Activated CD4-positive, alpha-beta T cell treated with anti-CD3 and anti-CD28 coated beads for 36 hours (primary cell): ENCODE measurements at regions of chr3 and their contacts with region 1.

Region 1: GRCh38 chr3:185659942-185660921 is 74.1 kb downstream of the SENP2 start:
- DNase-seq: peak; percentile 85
- ATAC-seq: peak; percentile 95
- H3K4me3 Mint-ChIP-seq: no peak overlapping the region
- H3K27ac Mint-ChIP-seq: no peak overlapping the region
- H3K4me1 Mint-ChIP-seq: peaks cover 2% of the 10 kb centered on the region
- H3K27me3 Mint-ChIP-seq: peaks cover 17% of the 10 kb centered on the region

Region 2: DNA sequence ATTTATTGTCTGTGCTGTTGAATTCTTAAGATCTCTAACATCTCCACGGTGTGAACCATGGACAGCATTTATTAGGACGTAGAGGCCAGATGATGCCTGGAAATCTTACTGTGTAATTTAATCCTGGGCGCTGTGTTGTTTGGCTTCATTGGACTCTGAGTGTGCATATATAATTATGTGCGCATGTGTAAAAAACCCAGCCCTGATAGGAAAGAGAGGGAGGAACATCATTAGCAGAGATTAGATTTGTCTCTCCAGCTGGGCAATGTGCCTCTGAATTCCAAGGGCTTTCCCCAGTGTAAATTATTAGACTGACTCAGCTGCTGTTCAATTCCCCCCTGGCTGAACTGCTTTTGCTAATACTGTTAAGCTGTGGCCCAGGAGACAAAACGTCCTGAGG is 257.7 kb before region 1 on chr3:
- CTCF ChIA-PET with region 1: no interaction called
- POLR2A ChIA-PET with region 1: no interaction called
- intact Hi-C with region 1: no loop called
- DNase-seq: no peak
- ATAC-seq: no peak
- H3K4me3 Mint-ChIP-seq: no peak overlapping the region
- H3K27ac Mint-ChIP-seq: no peak overlapping the region
- H3K4me1 Mint-ChIP-seq: no peaks in the 10 kb centered on the region
- H3K27me3 Mint-ChIP-seq: peaks cover 2% of the 10 kb centered on the region

Region 3: GRCh38 chr3:185623939-185624665 is 36.1 kb before region 1 on chr3:
- CTCF ChIA-PET with region 1: no interaction called
- POLR2A ChIA-PET with region 1: no interaction called
- intact Hi-C with region 1: no loop called
- DNase-seq: no peak
- ATAC-seq: no peak
- H3K4me3 Mint-ChIP-seq: no peak overlapping the region
- H3K27ac Mint-ChIP-seq: no peak overlapping the region
- H3K4me1 Mint-ChIP-seq: no peaks in the 10 kb centered on the region
- H3K27me3 Mint-ChIP-seq: no peaks in the 10 kb centered on the region

Region 4: DNA sequence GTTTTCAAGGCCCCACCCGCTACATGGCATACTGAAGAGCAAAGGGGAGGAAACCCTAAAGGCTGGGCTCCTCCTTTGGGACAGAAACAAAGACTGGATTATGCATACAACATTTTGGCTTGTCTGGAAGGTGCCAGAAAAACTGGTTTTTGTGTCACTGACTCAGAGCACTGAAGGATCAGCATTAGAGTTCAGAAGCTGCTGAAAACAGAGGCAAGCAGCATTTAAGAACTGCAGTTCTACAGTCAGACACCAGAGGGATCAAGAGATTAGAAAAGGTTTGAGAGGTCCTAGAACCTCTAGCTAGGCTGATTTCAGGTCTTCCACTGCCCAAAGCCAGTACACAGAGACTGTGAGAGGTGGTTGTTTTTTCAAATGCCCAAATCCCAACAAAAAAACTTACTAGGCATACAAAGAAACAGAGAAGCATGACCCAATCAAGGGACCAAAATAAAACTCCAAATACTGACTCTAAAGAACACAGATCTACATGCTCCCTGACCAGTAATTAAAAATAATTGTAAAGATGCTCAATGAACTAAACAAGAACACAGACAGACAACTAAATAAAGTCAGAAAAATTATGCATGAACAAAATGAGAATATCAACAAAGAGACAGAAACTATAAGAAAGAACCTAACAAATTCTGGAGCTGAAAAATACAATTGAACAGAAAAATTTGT is 17.1 kb after region 1 on chr3:
- CTCF ChIA-PET with region 1: interaction called, 34 read pairs
- POLR2A ChIA-PET with region 1: no interaction called
- intact Hi-C with region 1: no loop called
- DNase-seq: no peak
- ATAC-seq: no peak
- H3K4me3 Mint-ChIP-seq: no peak overlapping the region
- H3K27ac Mint-ChIP-seq: no peak overlapping the region
- H3K4me1 Mint-ChIP-seq: no peaks in the 10 kb centered on the region
- H3K27me3 Mint-ChIP-seq: peaks cover 23% of the 10 kb centered on the region

Region 5: GRCh38 chr3:185733980-185734724 is 73.9 kb after region 1 on chr3:
- CTCF ChIA-PET with region 1: interaction called, 12 read pairs
- POLR2A ChIA-PET with region 1: no interaction called
- intact Hi-C with region 1: no loop called
- DNase-seq: peak; percentile 37
- ATAC-seq: no peak
- H3K4me3 Mint-ChIP-seq: no peak overlapping the region
- H3K27ac Mint-ChIP-seq: no peak overlapping the region
- H3K4me1 Mint-ChIP-seq: no peaks in the 10 kb centered on the region
- H3K27me3 Mint-ChIP-seq: peaks cover 10% of the 10 kb centered on the region

Region 6: DNA sequence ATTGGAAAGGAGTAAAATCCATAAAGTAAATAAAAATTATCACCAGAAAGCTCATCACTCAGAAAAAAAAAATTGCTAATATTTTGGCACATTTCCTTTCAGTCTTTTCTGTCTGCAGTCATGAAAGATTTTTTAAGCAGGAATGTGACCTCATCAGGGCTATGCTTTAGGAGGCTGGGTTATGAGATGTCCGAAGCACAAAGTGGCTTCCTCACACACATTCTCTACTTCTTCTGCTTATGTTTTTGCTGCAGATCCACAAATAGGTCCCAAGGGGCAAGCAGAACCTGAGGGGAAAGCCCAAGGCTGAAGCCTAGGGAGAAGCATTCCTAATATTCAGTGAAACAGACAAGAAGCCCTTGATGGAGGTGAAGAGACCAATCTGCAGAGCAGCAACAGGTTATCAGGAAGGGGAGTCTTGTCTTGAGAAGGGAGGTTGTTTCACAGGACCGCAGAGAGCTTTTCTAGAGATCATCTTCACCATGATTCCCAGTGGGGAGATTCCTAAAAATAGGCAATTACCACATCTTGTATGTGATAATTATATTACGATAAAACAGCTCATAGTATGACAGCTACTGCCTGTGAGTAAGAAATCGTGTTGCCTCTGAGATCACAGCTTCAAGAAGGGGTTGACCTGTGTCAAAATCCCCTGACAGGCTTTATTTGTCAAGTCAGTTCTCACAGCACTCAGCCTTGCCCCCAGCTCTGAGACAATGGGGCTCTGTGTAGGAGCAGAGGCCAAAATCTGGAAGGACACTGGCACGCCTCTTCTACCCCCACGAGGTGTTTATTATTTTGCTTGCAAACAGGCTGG is 104.1 kb after region 1 on chr3:
- CTCF ChIA-PET with region 1: interaction called, 98 read pairs
- POLR2A ChIA-PET with region 1: no interaction called
- intact Hi-C with region 1: loop called (anchors 1 kb)
- DNase-seq: no peak
- ATAC-seq: no peak
- H3K4me3 Mint-ChIP-seq: no peak overlapping the region
- H3K27ac Mint-ChIP-seq: no peak overlapping the region
- H3K4me1 Mint-ChIP-seq: no peaks in the 10 kb centered on the region
- H3K27me3 Mint-ChIP-seq: peaks cover 20% of the 10 kb centered on the region

Region 7: GRCh38 chr3:185976977-185977678 is 316.9 kb after region 1 on chr3:
- CTCF ChIA-PET with region 1: no interaction called
- POLR2A ChIA-PET with region 1: no interaction called
- intact Hi-C with region 1: loop called in 1 of 2 experiments (anchors 5 kb)
- DNase-seq: peak; percentile 93
- ATAC-seq: peak; percentile 91
- H3K4me3 Mint-ChIP-seq: no peak overlapping the region
- H3K27ac Mint-ChIP-seq: peak overlapping the region; percentile 11
- H3K4me1 Mint-ChIP-seq: peaks cover 18% of the 10 kb centered on the region
- H3K27me3 Mint-ChIP-seq: no peaks in the 10 kb centered on the region